GM12878 (cell line): ENCODE measurements at regions of chr18 and their contacts with region 1.

Region 1: GRCh38 chr18:4639628-4640310 is 184.7 kb upstream of the DLGAP1 start:
- DNase-seq: peak; percentile 97
- ATAC-seq: peak; percentile 93
- H3K4me3 ChIP-seq: no peak overlapping the region
- H3K27ac ChIP-seq: peak overlapping the region; percentile 66
- H3K4me1 ChIP-seq: peaks cover 3% of the 10 kb centered on the region
- H3K27me3 ChIP-seq: no peaks in the 10 kb centered on the region
- CTCF ChIP-seq: no peak
- EP300 ChIP-seq: peak; percentile 96 to 97
- POLR2A ChIP-seq: no peak
- RAD21 ChIP-seq: no peak

Region 2: GRCh38 chr18:3966985-3967856 is 672.5 kb before region 1 on chr18:
- CTCF ChIA-PET with region 1: no interaction called
- POLR2A ChIA-PET with region 1: no interaction called
- RAD21 ChIA-PET with region 1: no interaction called
- SMC1A ChIA-PET with region 1: no interaction called
- in situ Hi-C with region 1: no loop called
- intact Hi-C with region 1: no loop called
- DNase-seq: no peak
- ATAC-seq: peak; percentile 66
- H3K4me3 ChIP-seq: no peak overlapping the region
- H3K27ac ChIP-seq: no peak overlapping the region
- H3K4me1 ChIP-seq: no peaks in the 10 kb centered on the region
- H3K27me3 ChIP-seq: no peaks in the 10 kb centered on the region
- CTCF ChIP-seq: no peak
- EP300 ChIP-seq: no peak
- POLR2A ChIP-seq: no peak
- RAD21 ChIP-seq: no peak

Region 3: GRCh38 chr18:4106407-4107033 is 533.2 kb before region 1 on chr18:
- CTCF ChIA-PET with region 1: interaction called, 4 read pairs
- POLR2A ChIA-PET with region 1: interaction called, 11 read pairs
- RAD21 ChIA-PET with region 1: no interaction called
- SMC1A ChIA-PET with region 1: interaction called, 5 read pairs
- in situ Hi-C with region 1: no loop called
- intact Hi-C with region 1: loop called (anchors 10 kb)
- DNase-seq: no peak
- ATAC-seq: peak; percentile 70
- H3K4me3 ChIP-seq: no peak overlapping the region
- H3K27ac ChIP-seq: no peak overlapping the region
- H3K4me1 ChIP-seq: no peaks in the 10 kb centered on the region
- H3K27me3 ChIP-seq: no peaks in the 10 kb centered on the region
- CTCF ChIP-seq: peak; percentile 53 to 79 (median 73); a peak in 5 of 6 replicates
- EP300 ChIP-seq: no peak
- POLR2A ChIP-seq: no peak
- RAD21 ChIP-seq: peak; percentile 69

Region 4: DNA sequence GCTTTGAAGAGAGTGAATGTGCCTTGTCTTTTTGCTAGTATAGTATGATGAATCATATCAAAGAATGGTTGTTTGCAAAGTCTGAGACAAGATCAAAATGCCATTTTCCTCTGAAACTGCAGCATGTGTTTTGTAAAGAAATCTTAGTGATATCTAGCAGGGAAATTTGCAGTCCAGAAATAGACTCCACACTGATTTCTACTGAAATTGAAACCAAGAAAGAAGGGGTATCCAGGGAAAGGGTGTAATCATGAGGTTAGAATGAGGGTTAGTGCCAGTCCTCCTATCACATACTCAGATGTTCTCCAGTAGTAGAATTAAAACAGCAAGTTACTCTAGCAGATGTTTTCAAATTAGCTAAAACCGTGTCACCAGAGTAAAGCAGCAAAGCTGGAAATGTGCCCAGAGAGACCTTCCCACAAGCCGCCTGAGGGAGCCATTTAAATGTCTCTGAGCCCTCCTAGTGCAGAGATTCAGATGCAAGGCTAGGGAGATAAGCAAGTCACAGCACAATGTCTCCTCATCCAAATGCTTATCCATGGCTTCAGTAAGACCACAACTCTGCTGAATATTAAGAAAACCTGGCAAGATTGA is 189.6 kb before region 1 on chr18:
- CTCF ChIA-PET with region 1: interaction called, 15 read pairs
- POLR2A ChIA-PET with region 1: interaction called, 4 read pairs
- RAD21 ChIA-PET with region 1: interaction called, 39 read pairs
- SMC1A ChIA-PET with region 1: interaction called, 33 read pairs
- in situ Hi-C with region 1: no loop called
- intact Hi-C with region 1: loop called (anchors 5 kb)
- DNase-seq: no peak
- ATAC-seq: peak; percentile 13
- H3K4me3 ChIP-seq: no peak overlapping the region
- H3K27ac ChIP-seq: no peak overlapping the region
- H3K4me1 ChIP-seq: no peaks in the 10 kb centered on the region
- H3K27me3 ChIP-seq: no peaks in the 10 kb centered on the region
- CTCF ChIP-seq: peak in 2 of 3 experiments; percentile 4 to 43; a peak in 2 of 6 replicates
- EP300 ChIP-seq: no peak
- POLR2A ChIP-seq: no peak
- RAD21 ChIP-seq: no peak

Region 5: GRCh38 chr18:4468511-4468910 is 171.3 kb before region 1 on chr18:
- CTCF ChIA-PET with region 1: no interaction called
- POLR2A ChIA-PET with region 1: interaction called, 6 read pairs
- RAD21 ChIA-PET with region 1: interaction called, 14 read pairs
- SMC1A ChIA-PET with region 1: interaction called, 3 read pairs
- in situ Hi-C with region 1: no loop called
- intact Hi-C with region 1: no loop called
- DNase-seq: no peak
- ATAC-seq: peak; percentile 42
- H3K4me3 ChIP-seq: no peak overlapping the region
- H3K27ac ChIP-seq: no peak overlapping the region
- H3K4me1 ChIP-seq: no peaks in the 10 kb centered on the region
- H3K27me3 ChIP-seq: no peaks in the 10 kb centered on the region
- CTCF ChIP-seq: no peak
- EP300 ChIP-seq: no peak
- POLR2A ChIP-seq: no peak
- RAD21 ChIP-seq: no peak

Region 6: GRCh38 chr18:4750393-4751346 is 110.9 kb after region 1 on chr18:
- CTCF ChIA-PET with region 1: interaction called, 6 read pairs
- POLR2A ChIA-PET with region 1: interaction called, 4 read pairs
- RAD21 ChIA-PET with region 1: interaction called, 13 read pairs
- SMC1A ChIA-PET with region 1: interaction called, 20 read pairs
- in situ Hi-C with region 1: no loop called
- intact Hi-C with region 1: no loop called
- DNase-seq: no peak
- ATAC-seq: peak; percentile 64
- H3K4me3 ChIP-seq: no peak overlapping the region
- H3K27ac ChIP-seq: no peak overlapping the region
- H3K4me1 ChIP-seq: no peaks in the 10 kb centered on the region
- H3K27me3 ChIP-seq: no peaks in the 10 kb centered on the region
- CTCF ChIP-seq: no peak
- EP300 ChIP-seq: no peak
- POLR2A ChIP-seq: no peak
- RAD21 ChIP-seq: no peak

Region 7: DNA sequence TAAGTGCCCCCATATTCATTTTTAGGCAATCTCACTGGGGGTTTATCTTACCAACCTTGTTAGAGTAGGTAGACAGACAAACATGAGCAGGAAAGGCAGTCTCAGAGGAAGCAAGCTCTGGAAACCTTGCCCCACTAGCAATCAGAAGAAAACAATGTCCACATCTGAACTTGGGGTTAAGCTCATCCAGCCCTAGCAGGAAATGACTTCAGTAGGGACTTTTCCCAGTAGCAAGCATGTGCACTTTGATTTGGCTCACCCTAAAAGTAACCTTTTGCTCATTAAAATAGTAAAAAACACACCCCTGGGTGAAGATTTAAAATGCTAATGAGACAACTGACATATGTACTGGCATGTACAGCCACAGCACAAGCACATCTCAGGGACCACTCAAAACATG is 381.8 kb after region 1 on chr18:
- CTCF ChIA-PET with region 1: interaction called, 10 read pairs
- POLR2A ChIA-PET with region 1: interaction called, 4 read pairs
- RAD21 ChIA-PET with region 1: interaction called, 7 read pairs
- SMC1A ChIA-PET with region 1: interaction called, 29 read pairs
- in situ Hi-C with region 1: no loop called
- intact Hi-C with region 1: loop called (anchors 10 kb)
- DNase-seq: no peak
- ATAC-seq: peak; percentile 83
- H3K4me3 ChIP-seq: no peak overlapping the region
- H3K27ac ChIP-seq: no peak overlapping the region
- H3K4me1 ChIP-seq: no peaks in the 10 kb centered on the region
- H3K27me3 ChIP-seq: no peaks in the 10 kb centered on the region
- CTCF ChIP-seq: no peak
- EP300 ChIP-seq: no peak
- POLR2A ChIP-seq: no peak
- RAD21 ChIP-seq: no peak